Activated CD8-positive, alpha-beta T cell treated with anti-CD3 and anti-CD28 coated beads for 36 hours (primary cell): ENCODE measurements at regions of chr19 and their contacts with region 1.

Region 1: GRCh38 chr19:13861732-13862531 is 15.0 kb upstream of the NANOS3 start:
- DNase-seq: peak; percentile 92
- ATAC-seq: peak; percentile 87
- H3K4me3 Mint-ChIP-seq: peak overlapping the region; percentile 90
- H3K27ac Mint-ChIP-seq: peak overlapping the region; percentile 99
- H3K4me1 Mint-ChIP-seq: peaks cover 40% of the 10 kb centered on the region
- H3K27me3 Mint-ChIP-seq: peaks cover 21% of the 10 kb centered on the region
- CTCF ChIP-seq: peak; percentile 99

Region 2: DNA sequence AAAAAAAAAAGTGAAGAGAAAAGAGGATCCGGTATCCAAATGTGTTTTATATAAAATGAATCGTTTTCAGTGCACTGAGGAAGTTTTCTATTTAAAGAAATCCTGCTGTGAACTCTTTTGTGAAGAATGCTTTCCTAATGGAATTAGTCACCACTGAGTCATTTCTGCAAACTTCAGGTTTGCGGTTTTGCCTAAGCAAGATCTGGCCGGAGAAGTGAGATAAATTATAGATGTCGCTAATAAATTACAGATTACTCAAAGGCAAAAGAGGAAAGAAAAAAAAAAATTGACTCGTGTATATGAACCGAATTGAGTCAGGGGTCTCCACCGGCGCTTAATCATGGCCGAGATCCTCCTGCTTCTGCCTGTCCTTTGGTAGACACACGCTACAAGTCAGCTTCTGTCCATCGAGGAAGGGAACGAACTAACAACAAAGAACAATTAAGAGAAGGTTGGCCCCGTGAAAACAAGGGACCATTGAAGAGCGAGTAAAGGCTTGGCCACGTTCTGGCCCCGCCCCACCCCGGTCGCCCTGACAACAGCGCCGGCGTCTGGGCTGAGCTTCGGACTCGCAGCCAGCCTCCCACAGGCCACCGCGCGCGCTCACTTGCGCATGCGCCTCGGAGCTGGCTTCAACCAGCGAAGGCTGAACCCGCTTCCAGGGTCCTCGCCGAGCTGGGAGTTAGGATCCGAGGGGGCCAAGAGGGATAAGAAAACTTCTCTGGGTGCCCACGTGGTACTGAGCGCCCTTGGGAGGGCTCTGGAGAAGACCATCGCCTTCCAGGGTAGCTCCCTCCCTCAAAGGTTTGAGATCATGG is 130.6 kb before region 1 on chr19:
- CTCF ChIA-PET with region 1: interaction called, 14 read pairs
- POLR2A ChIA-PET with region 1: no interaction called
- intact Hi-C with region 1: no loop called
- DNase-seq: peak; percentile 97
- ATAC-seq: peak; percentile 99
- H3K4me3 Mint-ChIP-seq: peak overlapping the region; percentile 86
- H3K27ac Mint-ChIP-seq: peak overlapping the region; percentile 96
- H3K4me1 Mint-ChIP-seq: peaks cover 22% of the 10 kb centered on the region
- H3K27me3 Mint-ChIP-seq: no peaks in the 10 kb centered on the region
- CTCF ChIP-seq: no peak

Region 3: DNA sequence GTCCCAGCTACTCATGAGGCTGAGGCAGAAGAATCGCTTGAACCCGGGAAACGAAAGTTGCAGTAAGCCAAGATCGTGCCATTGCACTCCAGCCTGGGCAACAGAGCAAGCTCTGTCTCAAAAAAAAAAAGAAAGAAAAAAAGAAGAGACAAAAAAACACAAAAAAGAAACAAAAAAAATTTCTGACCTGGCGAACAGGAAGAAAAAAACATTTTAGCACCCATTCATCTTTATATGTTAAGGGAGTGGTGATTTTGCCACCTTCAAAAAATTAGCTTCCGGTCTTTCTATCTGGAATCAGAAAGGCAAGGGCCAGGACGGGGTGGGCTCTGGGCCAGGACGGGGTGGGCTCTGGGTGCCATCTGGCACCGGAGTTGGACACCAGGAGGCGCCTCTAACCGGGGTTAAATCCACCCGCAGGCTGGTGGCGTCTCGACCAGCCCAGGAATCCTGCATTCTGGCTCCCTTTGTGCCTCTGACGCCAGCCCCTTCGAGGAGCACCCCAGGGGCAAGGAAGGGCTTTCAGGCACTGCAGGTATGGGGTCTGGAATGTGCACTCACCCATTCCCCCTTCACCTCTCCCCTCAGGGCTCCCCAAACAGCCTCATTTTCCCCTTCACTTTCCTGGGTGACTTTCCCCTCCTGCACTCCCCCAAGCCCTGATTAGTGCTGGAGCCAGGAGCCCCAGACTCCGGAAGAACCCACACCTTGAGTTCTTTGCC is 77.0 kb before region 1 on chr19:
- CTCF ChIA-PET with region 1: interaction called, 160 read pairs
- POLR2A ChIA-PET with region 1: interaction called, 8 read pairs
- intact Hi-C with region 1: loop called (anchors 2 kb)
- DNase-seq: peak; percentile 85
- ATAC-seq: peak; percentile 78
- H3K4me3 Mint-ChIP-seq: peak overlapping the region; percentile 14
- H3K27ac Mint-ChIP-seq: peak overlapping the region; percentile 41
- H3K4me1 Mint-ChIP-seq: peaks cover 32% of the 10 kb centered on the region
- H3K27me3 Mint-ChIP-seq: no peaks in the 10 kb centered on the region
- CTCF ChIP-seq: peak; percentile 77

Region 4: GRCh38 chr19:13833330-13834243 is 28.3 kb before region 1 on chr19:
- CTCF ChIA-PET with region 1: interaction called, 56 read pairs
- POLR2A ChIA-PET with region 1: interaction called, 41 read pairs
- intact Hi-C with region 1: no loop called
- DNase-seq: peak; percentile 96
- ATAC-seq: peak; percentile 85
- H3K4me3 Mint-ChIP-seq: peak overlapping the region; percentile 68
- H3K27ac Mint-ChIP-seq: peak overlapping the region; percentile 87
- H3K4me1 Mint-ChIP-seq: peaks cover 39% of the 10 kb centered on the region
- H3K27me3 Mint-ChIP-seq: no peaks in the 10 kb centered on the region
- CTCF ChIP-seq: peak; percentile 65

Region 5: GRCh38 chr19:13846557-13847406 is 15.2 kb before region 1 on chr19:
- CTCF ChIA-PET with region 1: interaction called, 45 read pairs
- POLR2A ChIA-PET with region 1: interaction called, 58 read pairs
- intact Hi-C with region 1: no loop called
- DNase-seq: peak; percentile 99
- ATAC-seq: peak; percentile 74
- H3K4me3 Mint-ChIP-seq: peak overlapping the region; percentile 74
- H3K27ac Mint-ChIP-seq: peak overlapping the region; percentile 98
- H3K4me1 Mint-ChIP-seq: peaks cover 55% of the 10 kb centered on the region
- H3K27me3 Mint-ChIP-seq: no peaks in the 10 kb centered on the region
- CTCF ChIP-seq: no peak

Region 6: DNA sequence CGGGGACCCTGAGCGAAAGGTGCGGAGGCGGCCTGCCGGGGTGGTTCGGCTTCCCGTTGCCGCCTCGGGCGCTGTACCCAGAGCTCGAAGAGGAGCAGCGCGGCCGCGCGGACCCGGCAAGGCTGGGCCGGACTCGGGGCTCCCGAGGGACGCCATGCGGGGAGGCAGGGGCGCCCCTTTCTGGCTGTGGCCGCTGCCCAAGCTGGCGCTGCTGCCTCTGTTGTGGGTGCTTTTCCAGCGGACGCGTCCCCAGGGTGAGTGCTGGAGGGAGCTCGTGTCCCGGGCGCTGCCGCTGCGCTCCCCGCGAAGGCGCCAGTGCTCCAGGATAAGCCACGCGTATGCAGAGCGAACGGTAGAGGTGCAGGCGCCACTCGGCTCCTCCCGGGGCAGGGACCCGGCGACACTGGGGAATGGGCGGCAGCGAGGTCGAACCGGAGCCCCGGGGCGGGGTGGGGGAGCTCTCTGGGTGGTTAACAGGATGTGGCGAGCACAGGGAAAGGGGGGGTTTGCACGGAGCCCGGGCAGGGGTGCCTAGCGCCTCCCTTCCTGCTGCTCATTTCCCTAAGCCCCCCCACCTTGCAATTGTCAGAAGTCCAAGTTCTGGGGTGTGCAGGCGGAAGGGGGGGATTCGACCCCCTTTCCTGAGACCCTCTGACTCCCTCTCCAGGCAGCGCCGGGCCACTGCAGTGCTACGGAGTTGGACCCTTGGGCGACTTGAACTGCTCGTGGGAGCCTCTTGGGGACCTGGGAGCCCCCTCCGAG is 170.0 kb after region 1 on chr19 and contains the start of gene IL27RA:
- CTCF ChIA-PET with region 1: no interaction called
- POLR2A ChIA-PET with region 1: no interaction called
- intact Hi-C with region 1: no loop called
- DNase-seq: peak; percentile 84
- ATAC-seq: peak; percentile 78
- H3K4me3 Mint-ChIP-seq: peak within 1 kb of the TSS; percentile 94
- H3K27ac Mint-ChIP-seq: peak within 1 kb of the TSS; percentile 93
- H3K4me1 Mint-ChIP-seq: peaks cover 23% of the 10 kb centered on the region
- H3K27me3 Mint-ChIP-seq: no peaks in the 10 kb centered on the region
- CTCF ChIP-seq: peak; percentile 80
- total RNA-seq, gene IL27RA: 46.5 to 48.2 TPM